ENCODE measurements at regions of chr1 and their contacts with region 1.

Region 1: DNA sequence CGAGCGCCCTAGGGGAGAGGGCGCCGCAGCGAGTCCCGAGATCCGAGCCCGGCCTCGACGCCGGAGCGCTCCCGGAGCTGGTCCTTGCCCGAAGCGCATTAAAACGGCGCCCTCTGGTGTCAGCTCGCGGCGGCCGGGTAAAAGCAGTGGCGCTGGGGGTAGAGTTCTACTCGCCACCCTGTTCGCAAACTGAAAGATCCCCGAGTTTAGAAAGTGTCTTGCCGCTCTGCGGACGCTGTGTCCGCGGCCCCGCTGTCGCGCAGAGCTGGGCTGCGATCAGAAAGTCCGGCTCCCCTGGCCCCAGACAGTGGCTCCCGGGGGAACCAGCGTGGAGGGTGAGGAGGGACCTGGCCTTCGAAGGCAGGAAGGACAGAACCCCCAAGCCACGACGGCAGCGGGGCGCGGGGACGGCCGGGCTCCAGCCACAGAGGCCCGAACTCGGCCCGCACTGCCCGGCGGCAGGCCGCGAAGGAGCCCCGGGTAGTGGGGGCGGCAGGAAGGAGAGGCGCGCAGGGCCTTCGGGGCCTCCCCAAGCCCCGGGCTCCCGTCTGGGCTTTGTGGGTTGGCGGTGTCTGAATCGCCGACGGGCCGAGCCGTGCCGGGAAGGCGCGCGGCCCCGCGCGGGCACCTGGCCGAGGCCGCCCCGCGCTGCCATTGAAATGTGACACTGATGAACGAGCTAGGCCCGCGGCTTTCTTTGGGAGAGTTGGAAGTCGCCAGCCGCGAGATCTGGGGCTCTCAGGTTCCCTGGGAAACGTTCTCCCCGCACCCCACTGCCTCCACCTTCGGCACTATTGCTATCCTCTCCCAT is 39.1 kb upstream of the NFIA start:
- DNase-seq: peak; percentile 91 to 94
- ATAC-seq: peak; percentile 95 to 99 (median 97)
- H3K4me3 ChIP-seq: peak overlapping the region; percentile 23 to 70 (median 63)
- H3K27ac ChIP-seq: peak overlapping the region in 9 of 10 donors; percentile 46 to 85 (median 77)
- H3K4me1 ChIP-seq: peaks cover 0 to 11% (median 5%) of the 10 kb centered on the region in 9 donors
- H3K27me3 ChIP-seq: peaks cover 0 to 14% (median 0%) of the 10 kb centered on the region in 7 donors
- CTCF ChIP-seq: peak; percentile 82 to 96 (median 94)

Region 2: DNA sequence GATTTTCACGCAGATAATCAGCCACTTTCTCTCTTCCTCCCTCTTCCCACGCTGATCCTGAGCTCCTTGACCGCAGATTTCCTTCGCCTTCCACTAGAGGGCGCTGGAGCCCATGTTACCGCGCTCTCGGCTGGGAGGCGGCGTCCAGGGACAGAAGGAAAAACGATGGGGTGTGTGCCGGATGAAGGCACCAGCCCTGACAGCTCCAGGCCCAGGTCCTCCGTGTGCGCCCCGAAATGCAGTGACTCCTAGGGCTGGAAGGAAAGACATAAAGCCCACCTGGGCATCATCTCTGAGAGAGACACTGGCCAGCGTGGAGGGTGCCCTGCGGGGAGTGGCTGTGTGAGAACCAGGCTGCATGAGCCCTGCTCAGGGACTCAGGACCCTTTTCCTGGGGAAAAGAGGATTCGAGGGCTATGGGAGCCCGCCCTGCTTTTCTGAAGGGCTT is 1071.7 kb before region 1 on chr1:
- intact Hi-C with region 1: loop called in 7 of 10 experiments (anchors 5 to 10 kb)
- DNase-seq: peak; percentile 63 to 68
- ATAC-seq: peak; percentile 78 to 93 (median 86)
- H3K4me3 ChIP-seq: no peak overlapping the region
- H3K27ac ChIP-seq: no peak overlapping the region
- H3K4me1 ChIP-seq: peaks cover 0 to 7% (median under 1%) of the 10 kb centered on the region in 9 donors
- H3K27me3 ChIP-seq: peaks cover 0 to 6% (median 0%) of the 10 kb centered on the region in 7 donors
- CTCF ChIP-seq: peak; percentile 82 to 93 (median 90)

Region 3: DNA sequence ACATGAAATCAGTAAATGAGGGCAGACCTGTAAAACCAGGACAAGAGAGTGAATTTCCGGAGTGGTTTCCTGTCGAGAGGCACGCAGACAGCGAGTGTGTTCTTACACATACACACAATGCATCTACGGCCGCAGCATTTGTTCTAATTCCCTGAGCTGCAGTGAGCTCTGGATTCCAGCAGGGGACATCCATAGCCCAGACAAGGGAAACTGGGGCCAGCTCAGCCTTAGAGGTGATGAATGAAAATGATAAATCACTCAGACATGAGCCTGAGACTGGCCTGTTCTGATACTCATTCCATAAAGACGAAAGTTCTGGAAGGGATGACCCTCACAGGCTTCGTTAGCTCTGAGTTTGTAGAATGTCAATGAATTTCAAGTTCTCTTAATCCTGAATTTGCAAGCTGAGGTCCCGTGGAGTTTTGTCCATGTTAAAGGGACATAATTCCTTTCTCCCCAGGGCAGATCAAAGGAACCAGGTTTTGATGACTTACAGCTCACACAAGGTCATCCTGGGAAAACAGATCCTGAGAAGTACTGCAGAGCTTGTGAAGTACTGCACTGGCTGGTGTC is 761.8 kb before region 1 on chr1:
- intact Hi-C with region 1: loop called in 7 of 10 experiments (anchors 2 to 10 kb)
- DNase-seq: peak; percentile 22 to 56
- ATAC-seq: peak; percentile 85 to 96 (median 90)
- H3K4me3 ChIP-seq: no peak overlapping the region
- H3K27ac ChIP-seq: no peak overlapping the region
- H3K4me1 ChIP-seq: peaks cover 0 to 19% (median 15%) of the 10 kb centered on the region in 9 donors
- H3K27me3 ChIP-seq: no peaks in the 10 kb centered on the region
- CTCF ChIP-seq: peak; percentile 83 to 95 (median 89)

Region 4: GRCh38 chr1:60697204-60697994 is 345.8 kb before region 1 on chr1:
- intact Hi-C with region 1: no loop called
- DNase-seq: no peak
- ATAC-seq: no peak
- H3K4me3 ChIP-seq: no peak overlapping the region
- H3K27ac ChIP-seq: no peak overlapping the region
- H3K4me1 ChIP-seq: peaks cover 0 to 15% (median 8%) of the 10 kb centered on the region in 9 donors
- H3K27me3 ChIP-seq: no peaks in the 10 kb centered on the region
- CTCF ChIP-seq: no peak

Region 5: DNA sequence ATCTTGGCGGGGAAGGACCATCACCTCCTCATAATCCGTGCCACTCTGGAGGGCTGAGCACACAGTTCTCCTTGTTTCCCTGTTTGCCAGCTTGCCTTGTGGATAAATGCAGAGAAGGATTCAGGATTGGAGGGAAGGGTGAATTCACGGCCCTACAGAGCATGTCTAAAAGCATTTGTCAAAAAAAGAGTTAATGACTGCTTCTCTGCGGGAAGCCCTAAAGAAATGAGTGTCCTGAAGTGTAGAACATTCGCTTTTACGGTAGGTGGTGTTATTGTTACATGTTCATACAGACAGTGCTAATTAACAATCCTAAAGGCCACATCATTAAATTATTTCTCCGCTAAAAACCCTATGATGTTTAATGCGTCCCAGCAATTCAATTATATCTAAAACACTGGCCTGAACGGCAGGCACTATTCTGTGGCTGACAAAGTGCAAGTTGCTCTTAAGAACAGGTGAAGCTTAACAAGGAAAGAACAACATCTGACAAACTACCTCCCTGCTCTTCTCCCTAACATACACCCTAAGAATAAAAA is 73.2 kb before region 1 on chr1:
- intact Hi-C with region 1: loop called in 8 of 10 experiments (anchors 2 to 10 kb)
- DNase-seq: no peak
- ATAC-seq: peak; percentile 52 to 83 (median 75)
- H3K4me3 ChIP-seq: peak overlapping the region in 1 of 10 donors; percentile 10
- H3K27ac ChIP-seq: peak overlapping the region in 7 of 10 donors; percentile 41 to 76 (median 66)
- H3K4me1 ChIP-seq: peaks cover 0 to 14% (median 8%) of the 10 kb centered on the region in 9 donors
- H3K27me3 ChIP-seq: no peaks in the 10 kb centered on the region
- CTCF ChIP-seq: peak; percentile 17 to 70 (median 60)

Region 6: DNA sequence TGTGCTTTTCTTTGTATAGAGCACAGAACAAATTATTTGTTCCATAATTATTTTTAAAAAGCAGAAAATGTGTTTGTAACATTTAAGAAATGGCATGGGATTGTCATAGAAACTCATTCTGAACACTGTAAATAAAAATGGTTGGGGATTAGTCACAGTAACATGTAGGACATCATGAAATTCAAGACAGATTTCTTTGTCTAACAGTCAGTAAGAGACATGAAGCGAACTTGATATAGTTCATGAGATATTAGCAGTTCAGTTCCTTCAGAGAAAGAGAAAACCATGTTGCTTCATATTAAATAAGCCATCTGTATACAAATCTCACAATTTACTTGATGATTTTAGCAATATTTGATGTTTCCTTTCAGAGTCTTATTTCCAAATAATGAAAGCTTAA is 58.8 kb after region 1 on chr1:
- intact Hi-C with region 1: no loop called
- DNase-seq: no peak
- ATAC-seq: peak in 3 of 8 donors; percentile 16 to 47 (median 25)
- H3K4me3 ChIP-seq: peak overlapping the region in 9 of 10 donors; percentile 1 to 44 (median 38)
- H3K27ac ChIP-seq: peak overlapping the region in 9 of 10 donors; percentile 36 to 84 (median 63)
- H3K4me1 ChIP-seq: peaks cover 8 to 90% (median 77%) of the 10 kb centered on the region in 9 donors
- H3K27me3 ChIP-seq: no peaks in the 10 kb centered on the region
- CTCF ChIP-seq: no peak

Region 7: GRCh38 chr1:61588736-61589672 is 545.8 kb after region 1 on chr1:
- intact Hi-C with region 1: loop called in 3 of 10 experiments (anchors 5 kb)
- DNase-seq: peak; percentile 36 to 52
- ATAC-seq: peak; percentile 57 to 83 (median 74)
- H3K4me3 ChIP-seq: no peak overlapping the region
- H3K27ac ChIP-seq: no peak overlapping the region
- H3K4me1 ChIP-seq: no peaks in the 10 kb centered on the region
- H3K27me3 ChIP-seq: no peaks in the 10 kb centered on the region
- CTCF ChIP-seq: peak; percentile 40 to 75 (median 69)